ENCODE measurements at regions of chr5 and their contacts with region 1.

Region 1: DNA sequence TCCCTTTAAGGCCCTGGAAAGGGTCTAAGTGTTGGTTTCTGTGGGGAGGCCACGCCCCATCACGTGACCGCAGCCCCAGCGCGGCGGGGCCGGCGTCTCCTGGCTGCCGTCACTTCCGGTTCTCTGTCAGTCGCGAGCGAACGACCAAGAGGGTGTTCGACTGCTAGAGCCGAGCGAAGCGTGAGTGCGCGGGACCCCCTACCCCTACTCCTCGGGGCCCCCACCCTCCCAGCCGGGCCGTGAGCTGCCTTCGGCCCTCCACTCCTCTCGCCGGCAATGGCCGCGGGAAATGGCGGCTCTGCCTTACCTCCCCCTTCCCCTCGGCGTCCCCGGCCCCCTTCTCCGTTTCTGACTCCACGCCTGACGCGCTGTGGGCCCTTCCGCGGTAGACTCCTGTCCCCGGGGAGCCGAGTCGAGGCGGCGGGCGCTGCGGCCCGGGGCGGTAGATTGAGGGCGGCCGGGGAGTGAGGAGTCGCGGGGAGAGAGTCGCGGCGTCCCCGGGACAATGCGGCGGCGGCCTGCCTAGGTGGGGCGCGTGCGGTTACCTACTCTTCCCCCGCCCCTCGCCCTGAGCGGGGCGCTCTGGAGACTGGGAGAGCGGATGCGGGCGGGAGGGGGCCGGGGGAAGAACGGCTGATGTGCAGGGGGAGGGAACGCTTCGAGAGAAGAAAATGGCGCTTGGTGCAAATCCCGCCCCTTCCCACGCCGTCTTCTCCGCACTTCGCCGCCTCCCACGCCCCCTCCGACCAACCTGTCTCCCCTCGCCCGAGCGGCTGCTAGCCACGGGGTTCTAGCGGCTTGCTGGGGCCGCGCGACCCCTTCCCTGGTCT is at the start of gene SUB1:
- H3K4me3 Mint-ChIP-seq: peak within 1 kb of the TSS; percentile 90
- H3K27ac Mint-ChIP-seq: peak within 1 kb of the TSS; percentile 93
- H3K4me1 Mint-ChIP-seq: peaks cover 64% of the 10 kb centered on the region
- H3K27me3 Mint-ChIP-seq: no peaks in the 10 kb centered on the region

Region 2: GRCh38 chr5:32406650-32407049 is 179.0 kb before region 1 on chr5:
- intact Hi-C with region 1: loop called (anchors 10 kb)
- H3K4me3 Mint-ChIP-seq: no peak overlapping the region
- H3K27ac Mint-ChIP-seq: no peak overlapping the region
- H3K4me1 Mint-ChIP-seq: no peaks in the 10 kb centered on the region
- H3K27me3 Mint-ChIP-seq: no peaks in the 10 kb centered on the region

Region 3: GRCh38 chr5:32444431-32445286 is 141.0 kb before region 1 on chr5 and contains the start of gene ZFR:
- intact Hi-C with region 1: loop called (anchors 2 kb)
- H3K4me3 Mint-ChIP-seq: peak within 1 kb of the TSS; percentile 87
- H3K27ac Mint-ChIP-seq: peak within 1 kb of the TSS; percentile 83
- H3K4me1 Mint-ChIP-seq: peaks cover 36% of the 10 kb centered on the region
- H3K27me3 Mint-ChIP-seq: no peaks in the 10 kb centered on the region

Region 4: DNA sequence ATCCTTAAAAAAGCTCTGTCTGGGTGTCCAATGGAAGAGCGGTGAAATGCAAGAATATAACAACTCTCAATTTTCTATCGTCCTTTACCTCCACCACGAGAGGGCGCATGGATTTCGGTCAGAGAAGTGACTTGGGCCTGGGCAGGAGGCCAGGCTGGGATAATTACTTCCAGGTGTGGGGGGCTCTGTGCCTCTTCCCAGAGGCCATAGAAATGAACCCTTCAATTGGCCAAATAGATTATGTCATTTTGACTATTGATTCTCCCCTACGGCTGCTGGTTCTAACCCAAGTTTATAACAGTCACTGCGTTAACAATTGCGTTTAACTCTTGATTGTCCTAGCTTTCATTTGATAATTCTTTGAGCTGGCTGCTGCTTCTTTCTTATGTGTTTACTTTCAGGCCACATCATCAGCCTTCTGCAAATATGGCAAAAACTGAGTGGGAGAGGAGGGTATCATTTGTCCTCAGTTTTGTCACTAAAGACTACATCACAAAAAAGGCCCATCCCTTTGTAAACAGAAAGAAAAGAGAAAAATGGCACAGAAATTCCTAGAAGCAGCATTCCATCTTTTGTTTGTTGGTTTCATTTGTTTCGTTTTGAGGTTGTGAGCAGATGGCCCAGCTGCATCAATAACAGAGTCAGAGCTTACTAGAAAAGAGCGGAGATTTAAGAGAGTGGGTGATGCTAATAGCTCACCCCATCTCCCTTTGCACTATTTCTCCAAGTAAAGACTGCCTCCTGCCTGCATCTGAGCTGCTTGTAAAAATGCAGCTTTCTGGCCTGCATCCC is 95.7 kb before region 1 on chr5:
- intact Hi-C with region 1: loop called (anchors 1 kb)
- H3K4me3 Mint-ChIP-seq: no peak overlapping the region
- H3K27ac Mint-ChIP-seq: no peak overlapping the region
- H3K4me1 Mint-ChIP-seq: no peaks in the 10 kb centered on the region
- H3K27me3 Mint-ChIP-seq: no peaks in the 10 kb centered on the region

Region 5: GRCh38 chr5:32539981-32540845 is 45.4 kb before region 1 on chr5:
- intact Hi-C with region 1: loop called (anchors 2 kb)
- H3K4me3 Mint-ChIP-seq: peak overlapping the region; percentile 14
- H3K27ac Mint-ChIP-seq: peak overlapping the region; percentile 90
- H3K4me1 Mint-ChIP-seq: peaks cover 75% of the 10 kb centered on the region
- H3K27me3 Mint-ChIP-seq: no peaks in the 10 kb centered on the region

Measured in dendritic cell treated with granulocyte-macrophage colony-stimulating factor and Interleukin-4, amounts not matched to agents 40 ng/mL and 50 ng/mL, for 4 days (primary cell).